Activated B cell treated with CpG ODN at 0.5 μM for 24 hours (primary cell): ENCODE measurements at regions of chr7 and their contacts with region 1.

Region 1: DNA sequence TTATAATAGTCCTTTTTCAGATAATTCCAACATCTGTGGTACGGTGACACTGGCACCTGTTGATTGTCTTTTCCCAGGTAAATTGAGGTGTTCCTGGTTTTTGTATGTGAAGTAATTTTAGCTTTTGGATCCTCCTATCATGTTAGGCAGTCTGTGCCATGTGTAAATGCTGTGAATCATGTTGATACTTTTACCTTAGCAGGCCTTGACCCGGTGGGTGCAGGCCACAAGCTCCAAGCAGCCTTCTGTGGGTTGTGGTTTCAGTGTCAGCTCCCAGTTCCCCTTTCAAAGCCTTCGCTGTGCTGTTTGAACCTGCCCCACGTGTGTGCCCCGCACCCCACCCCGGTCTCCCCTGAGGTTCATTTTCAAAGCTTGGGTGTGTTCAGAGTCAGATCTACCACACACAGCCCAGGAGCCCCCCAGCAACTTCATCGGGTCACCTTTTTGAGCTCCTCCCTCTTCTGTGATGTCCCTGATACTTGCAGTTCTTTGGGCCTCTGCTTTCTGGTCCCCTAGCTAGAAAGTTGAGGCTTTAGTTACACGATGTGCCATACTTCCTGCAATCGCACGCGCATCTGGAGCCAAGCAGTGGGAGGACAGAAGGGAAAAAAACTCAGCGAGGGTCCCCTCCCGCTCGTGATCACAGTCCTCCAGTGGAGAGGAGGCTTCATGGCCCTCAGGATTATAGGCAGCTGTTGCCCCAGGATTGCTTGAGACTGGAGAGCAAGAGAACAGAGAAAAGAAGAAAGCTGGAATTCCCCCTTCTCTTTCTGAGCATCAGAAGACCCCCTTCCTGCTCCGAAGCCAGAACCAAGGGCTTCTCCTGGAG is 8.7 kb upstream of the BHLHA15 start:
- DNase-seq: peak; percentile 81
- ATAC-seq: peak; percentile 87
- H3K4me3 Mint-ChIP-seq: peak overlapping the region; percentile 80
- H3K27ac Mint-ChIP-seq: peak overlapping the region; percentile 86
- H3K4me1 Mint-ChIP-seq: peaks cover 57% of the 10 kb centered on the region
- H3K27me3 Mint-ChIP-seq: peaks cover 3% of the 10 kb centered on the region
- CTCF ChIP-seq: no peak

Region 2: DNA sequence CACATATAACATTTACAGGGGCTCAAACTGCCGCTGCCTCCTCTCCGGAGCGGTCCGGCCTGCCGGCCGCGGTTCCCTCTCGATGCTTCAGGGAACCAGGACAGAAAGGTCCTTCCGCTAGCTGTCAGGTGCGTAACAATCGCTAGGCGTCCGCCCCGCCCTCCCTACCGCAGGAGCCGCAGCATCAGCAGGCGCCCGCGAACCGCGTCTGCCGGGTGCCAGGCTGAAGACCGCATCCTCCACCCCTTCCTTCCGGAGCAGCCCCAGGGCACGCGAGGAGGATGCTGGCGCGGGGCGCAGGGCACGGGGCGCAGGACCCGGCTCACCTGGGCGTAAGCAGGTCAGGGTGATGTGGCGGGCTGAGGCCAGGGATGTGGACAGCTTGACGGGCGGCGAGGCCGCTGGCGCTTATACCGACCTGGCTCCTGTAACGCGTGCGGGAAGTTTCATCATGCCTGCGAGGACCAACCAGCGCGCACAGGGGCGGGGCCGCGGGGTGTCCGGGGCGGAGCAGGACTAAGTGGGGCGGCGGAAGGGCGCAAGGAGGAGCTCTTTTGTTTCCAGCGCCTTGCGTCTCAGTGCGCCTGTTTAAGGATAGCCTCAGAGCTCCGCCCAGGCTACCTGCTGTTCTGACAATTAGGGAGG is 330.4 kb before region 1 on chr7 and contains the start of gene ASNS:
- CTCF ChIA-PET with region 1: no interaction called
- POLR2A ChIA-PET with region 1: interaction called, 4 read pairs
- intact Hi-C with region 1: loop called (anchors 1 kb)
- DNase-seq: peak; percentile 86
- ATAC-seq: peak; percentile 92
- H3K4me3 Mint-ChIP-seq: peak within 1 kb of the TSS; percentile 89
- H3K27ac Mint-ChIP-seq: peak within 1 kb of the TSS; percentile 90
- H3K4me1 Mint-ChIP-seq: peaks cover 13% of the 10 kb centered on the region
- H3K27me3 Mint-ChIP-seq: no peaks in the 10 kb centered on the region
- CTCF ChIP-seq: no peak
- total RNA-seq, gene ASNS: 92.1 and 101 TPM in 2 replicates

Region 3: DNA sequence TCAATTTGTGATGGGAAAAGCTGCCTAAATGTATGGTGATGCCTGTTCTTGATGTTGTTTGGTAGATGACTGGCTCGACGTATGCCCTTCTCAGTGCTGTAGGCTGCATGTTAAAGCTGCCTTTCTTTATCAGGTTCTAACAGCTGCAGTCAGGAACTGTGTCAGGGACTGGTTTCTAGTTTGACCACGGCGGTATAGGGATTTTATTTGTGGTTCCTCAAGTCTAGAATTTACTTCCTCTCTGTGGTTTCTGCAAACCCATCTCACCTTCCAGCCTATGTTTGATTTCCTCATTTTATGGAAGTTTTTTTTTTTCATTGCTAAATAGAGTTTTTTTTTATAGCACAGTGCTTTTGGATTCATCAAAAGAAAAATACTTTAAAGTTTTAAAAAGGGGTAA is 69.4 kb before region 1 on chr7:
- CTCF ChIA-PET with region 1: no interaction called
- POLR2A ChIA-PET with region 1: interaction called, 10 read pairs
- intact Hi-C with region 1: loop called (anchors 1 kb)
- DNase-seq: no peak
- ATAC-seq: peak; percentile 70
- H3K4me3 Mint-ChIP-seq: peak overlapping the region; percentile 50
- H3K27ac Mint-ChIP-seq: no peak overlapping the region
- H3K4me1 Mint-ChIP-seq: peaks cover 72% of the 10 kb centered on the region
- H3K27me3 Mint-ChIP-seq: peaks cover 49% of the 10 kb centered on the region
- CTCF ChIP-seq: no peak

Region 4: DNA sequence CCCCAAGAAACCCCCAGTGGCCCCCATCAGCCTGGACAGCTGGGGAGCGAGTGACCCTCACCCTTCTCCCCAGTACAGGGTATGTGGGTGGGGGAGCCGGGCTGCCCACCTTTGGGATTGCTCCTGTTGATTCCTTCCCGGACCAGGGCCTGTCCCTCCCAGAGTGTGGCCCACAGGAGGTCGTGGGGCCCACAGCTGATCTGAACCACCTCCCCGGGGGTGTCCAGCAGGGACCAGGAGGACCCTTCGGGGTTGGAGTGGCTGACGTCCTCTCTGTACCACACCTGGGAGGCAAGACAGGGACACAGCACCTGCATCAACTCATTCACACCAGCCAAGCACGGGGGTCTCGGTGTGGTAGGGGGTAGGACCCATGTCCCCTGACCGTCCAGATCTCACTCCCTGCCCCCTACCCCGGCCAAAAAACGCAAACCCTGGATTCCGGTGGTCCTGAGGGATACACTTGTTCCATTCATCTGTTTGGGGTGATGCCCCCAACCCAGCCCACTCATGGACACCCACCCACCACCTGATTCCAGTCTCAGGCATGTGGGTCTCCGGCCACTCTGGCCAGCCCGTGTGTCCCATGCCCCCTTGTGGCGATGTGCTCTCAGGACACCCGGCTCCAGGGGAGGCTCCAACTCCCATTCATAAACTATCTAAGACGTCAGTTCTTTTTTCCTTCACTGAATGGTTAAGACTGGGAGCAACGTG is 38.5 kb after region 1 on chr7:
- CTCF ChIA-PET with region 1: no interaction called
- POLR2A ChIA-PET with region 1: interaction called, 5 read pairs
- intact Hi-C with region 1: loop called (anchors 2 kb)
- DNase-seq: no peak
- ATAC-seq: peak; percentile 71
- H3K4me3 Mint-ChIP-seq: no peak overlapping the region
- H3K27ac Mint-ChIP-seq: no peak overlapping the region
- H3K4me1 Mint-ChIP-seq: no peaks in the 10 kb centered on the region
- H3K27me3 Mint-ChIP-seq: no peaks in the 10 kb centered on the region
- CTCF ChIP-seq: no peak

Region 5: DNA sequence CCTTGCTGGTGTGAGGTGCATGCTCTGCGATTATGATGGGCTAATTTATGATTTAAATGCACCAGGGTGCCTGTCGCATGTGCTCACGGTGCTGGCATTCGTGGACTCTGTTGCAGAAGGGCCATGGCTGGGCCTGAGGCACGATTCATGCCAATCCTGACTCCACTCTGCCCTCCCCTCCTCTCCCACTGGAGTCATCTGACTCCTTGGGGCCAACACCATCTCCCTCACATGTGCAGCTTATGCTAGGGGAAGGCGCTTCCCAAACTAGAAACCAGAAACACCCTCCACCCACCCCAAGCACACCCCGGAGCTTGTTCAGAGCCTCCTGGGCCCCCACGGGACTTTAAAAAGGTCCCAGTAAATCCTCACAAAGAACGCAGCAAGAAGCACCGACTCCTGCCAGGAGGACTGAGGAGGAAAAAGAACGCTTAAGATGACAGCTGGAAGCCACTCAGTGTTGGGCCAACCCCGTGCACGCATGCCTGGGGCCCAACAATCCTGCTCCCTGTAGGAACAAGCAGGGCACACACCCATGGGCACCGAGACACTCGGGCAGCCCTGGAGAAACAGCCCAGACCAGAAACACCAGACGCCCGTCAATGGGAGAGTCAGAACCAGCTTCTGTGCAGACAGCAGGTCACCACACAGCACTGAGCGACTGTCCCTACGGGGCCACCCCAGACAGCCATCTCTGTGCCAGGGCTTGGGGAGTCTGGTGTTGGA is 93.0 kb after region 1 on chr7:
- CTCF ChIA-PET with region 1: no interaction called
- POLR2A ChIA-PET with region 1: no interaction called
- intact Hi-C with region 1: no loop called
- DNase-seq: no peak
- ATAC-seq: no peak
- H3K4me3 Mint-ChIP-seq: no peak overlapping the region
- H3K27ac Mint-ChIP-seq: no peak overlapping the region
- H3K4me1 Mint-ChIP-seq: no peaks in the 10 kb centered on the region
- H3K27me3 Mint-ChIP-seq: no peaks in the 10 kb centered on the region
- CTCF ChIP-seq: no peak

Region 6: DNA sequence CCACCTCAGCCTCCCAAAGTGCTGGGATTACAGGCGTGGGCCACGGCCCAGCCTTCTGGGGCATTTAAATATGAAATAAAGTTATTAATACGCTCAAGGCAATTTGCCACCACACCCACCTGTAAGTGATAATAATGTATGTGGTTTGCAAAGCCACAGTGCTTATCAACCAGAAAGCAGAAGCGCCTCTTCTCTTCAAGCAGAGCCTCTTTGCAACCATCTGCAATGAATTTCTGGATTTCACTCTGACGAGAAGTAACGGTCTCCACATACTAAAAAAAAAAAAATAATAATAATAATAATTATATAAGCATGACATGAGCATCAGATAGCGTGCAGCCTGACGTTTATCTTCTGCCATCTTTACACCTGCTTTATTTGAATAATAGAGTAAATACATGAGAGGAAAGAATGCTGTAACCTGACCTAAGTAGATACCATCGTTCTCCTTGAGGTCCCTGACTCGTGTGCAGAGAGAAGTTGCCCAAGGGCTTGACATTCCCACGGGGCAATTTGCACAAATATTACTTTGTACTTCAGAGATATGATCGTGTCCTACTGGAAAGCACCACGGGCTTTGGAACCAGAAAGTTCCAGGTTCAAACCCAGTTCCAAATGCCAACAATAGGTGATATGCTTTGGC is 112.9 kb after region 1 on chr7:
- CTCF ChIA-PET with region 1: no interaction called
- POLR2A ChIA-PET with region 1: interaction called, 20 read pairs
- intact Hi-C with region 1: loop called (anchors 1 kb)
- DNase-seq: no peak
- ATAC-seq: peak; percentile 61
- H3K4me3 Mint-ChIP-seq: peak overlapping the region; percentile 15
- H3K27ac Mint-ChIP-seq: peak overlapping the region; percentile 76
- H3K4me1 Mint-ChIP-seq: peaks cover 41% of the 10 kb centered on the region
- H3K27me3 Mint-ChIP-seq: peaks cover 28% of the 10 kb centered on the region
- CTCF ChIP-seq: no peak